CD4-positive, alpha-beta T cell (primary cell): ENCODE measurements at regions of chr11 and their contacts with region 1.

Region 1: GRCh38 chr11:9250139-9250582 is 15.0 kb downstream of the DENND5A start:
- DNase-seq: peak in 10 of 14 experiments; percentile 3 to 82 (median 38)
- ATAC-seq: peak; percentile 89
- H3K4me3 ChIP-seq: no peak overlapping the region
- H3K4me3 Mint-ChIP-seq: peak overlapping the region; percentile 64
- H3K27ac ChIP-seq: peak overlapping the region in 1 of 2 donors; percentile 25
- H3K27ac Mint-ChIP-seq: peak overlapping the region; percentile 72
- H3K4me1 ChIP-seq: peaks cover 67% of the 10 kb centered on the region
- H3K4me1 Mint-ChIP-seq: peaks cover 73% of the 10 kb centered on the region
- H3K27me3 ChIP-seq: no peaks in the 10 kb centered on the region
- H3K27me3 Mint-ChIP-seq: no peaks in the 10 kb centered on the region
- CTCF ChIP-seq: no peak

Region 2: DNA sequence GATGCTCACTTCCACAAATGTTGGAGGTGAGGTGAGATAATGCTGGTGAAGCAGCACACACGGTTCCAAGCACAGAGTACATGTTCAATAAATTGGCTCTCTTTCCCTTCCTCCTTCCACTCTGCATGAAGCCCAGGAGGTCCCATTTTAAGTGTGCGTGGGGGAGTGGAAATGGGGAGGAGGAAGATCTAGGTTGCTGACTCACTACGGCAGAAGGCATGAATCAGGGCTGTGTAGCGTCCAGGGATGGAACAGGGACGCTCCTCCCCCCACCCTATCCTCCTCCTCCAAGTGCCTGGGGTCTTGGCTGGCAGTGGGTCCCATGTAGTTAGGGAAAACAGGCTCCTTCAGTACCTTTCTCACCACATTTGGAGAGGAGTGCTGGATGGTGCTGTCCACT is 611.9 kb before region 1 on chr11:
- CTCF ChIA-PET with region 1: no interaction called
- POLR2A ChIA-PET with region 1: no interaction called
- intact Hi-C with region 1: no loop called
- DNase-seq: no peak
- ATAC-seq: no peak
- H3K4me3 ChIP-seq: no peak overlapping the region
- H3K4me3 Mint-ChIP-seq: no peak overlapping the region
- H3K27ac ChIP-seq: no peak overlapping the region
- H3K27ac Mint-ChIP-seq: no peak overlapping the region
- H3K4me1 ChIP-seq: no peaks in the 10 kb centered on the region
- H3K4me1 Mint-ChIP-seq: no peaks in the 10 kb centered on the region
- H3K27me3 ChIP-seq: no peaks in the 10 kb centered on the region
- H3K27me3 Mint-ChIP-seq: no peaks in the 10 kb centered on the region
- CTCF ChIP-seq: no peak

Region 3: GRCh38 chr11:9210922-9211320 is 39.2 kb before region 1 on chr11:
- CTCF ChIA-PET with region 1: no interaction called
- POLR2A ChIA-PET with region 1: interaction called, 3 read pairs
- intact Hi-C with region 1: loop called in 1 of 2 experiments (anchors 5 kb)
- DNase-seq: peak in 2 of 14 experiments; percentile 28 to 33
- ATAC-seq: no peak
- H3K4me3 ChIP-seq: no peak overlapping the region
- H3K4me3 Mint-ChIP-seq: no peak overlapping the region
- H3K27ac ChIP-seq: no peak overlapping the region
- H3K27ac Mint-ChIP-seq: no peak overlapping the region
- H3K4me1 ChIP-seq: peaks cover 13% of the 10 kb centered on the region
- H3K4me1 Mint-ChIP-seq: peaks cover 74% of the 10 kb centered on the region
- H3K27me3 ChIP-seq: no peaks in the 10 kb centered on the region
- H3K27me3 Mint-ChIP-seq: no peaks in the 10 kb centered on the region
- CTCF ChIP-seq: no peak

Region 4: GRCh38 chr11:9259981-9260837 is 10.0 kb after region 1 on chr11:
- CTCF ChIA-PET with region 1: interaction called, 3 read pairs
- POLR2A ChIA-PET with region 1: interaction called, 33 read pairs
- intact Hi-C with region 1: loop called (anchors 1 to 2 kb)
- DNase-seq: no peak
- ATAC-seq: no peak
- H3K4me3 ChIP-seq: no peak overlapping the region
- H3K4me3 Mint-ChIP-seq: peak overlapping the region; percentile 37
- H3K27ac ChIP-seq: no peak overlapping the region
- H3K27ac Mint-ChIP-seq: peak overlapping the region; percentile 79
- H3K4me1 ChIP-seq: peaks cover 38% of the 10 kb centered on the region
- H3K4me1 Mint-ChIP-seq: peaks cover 48% of the 10 kb centered on the region
- H3K27me3 ChIP-seq: no peaks in the 10 kb centered on the region
- H3K27me3 Mint-ChIP-seq: no peaks in the 10 kb centered on the region
- CTCF ChIP-seq: no peak